PC-9 (cell line): ENCODE measurements at regions of chr15 and their contacts with region 1.

Region 1: DNA sequence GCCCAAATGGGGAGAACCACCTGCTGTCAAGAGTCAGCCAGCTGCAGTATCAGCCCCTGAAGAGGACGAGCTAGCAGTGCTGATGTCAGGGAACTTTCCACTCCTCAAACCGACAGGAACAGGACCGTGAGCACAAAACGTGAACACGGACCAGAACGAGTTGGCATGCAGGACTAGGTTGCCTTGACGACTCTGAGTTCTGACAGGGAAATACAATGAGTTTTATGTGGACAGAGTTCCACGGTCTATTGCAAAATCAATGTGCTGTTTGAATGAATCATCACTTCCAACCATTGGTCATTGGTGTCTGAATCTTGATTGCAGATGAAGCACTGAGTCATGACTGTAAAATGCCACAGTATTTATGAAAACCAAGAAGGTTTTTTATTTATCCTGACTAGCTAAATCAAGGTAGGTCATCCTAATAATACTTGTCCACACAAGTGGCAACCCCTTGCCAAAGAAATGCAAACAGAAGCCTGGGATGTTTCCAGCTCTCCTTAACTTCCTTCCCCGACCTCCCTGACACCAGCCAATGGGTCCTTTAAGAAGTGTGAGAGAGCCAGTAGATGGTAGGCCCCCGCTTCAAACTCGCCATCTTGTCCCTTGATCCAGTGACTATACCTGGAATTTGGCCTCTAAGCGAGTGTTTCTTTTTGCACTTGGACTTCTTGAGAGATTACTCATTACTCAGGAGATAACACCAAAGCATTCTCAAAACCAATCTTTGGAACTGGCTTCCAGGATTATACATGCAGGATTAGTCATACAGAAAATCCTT is 119.6 kb downstream of the ASB7 start:
- DNase-seq: peak; percentile 87 to 100
- H3K4me3 ChIP-seq: peak overlapping the region; percentile 41; the same call in 1 of the 2 replicates
- H3K27ac ChIP-seq: peak overlapping the region; percentile 100
- H3K4me1 ChIP-seq: peaks cover 83% of the 10 kb centered on the region
- H3K27me3 ChIP-seq: no peaks in the 10 kb centered on the region
- CTCF ChIP-seq: no peak

Region 2: DNA sequence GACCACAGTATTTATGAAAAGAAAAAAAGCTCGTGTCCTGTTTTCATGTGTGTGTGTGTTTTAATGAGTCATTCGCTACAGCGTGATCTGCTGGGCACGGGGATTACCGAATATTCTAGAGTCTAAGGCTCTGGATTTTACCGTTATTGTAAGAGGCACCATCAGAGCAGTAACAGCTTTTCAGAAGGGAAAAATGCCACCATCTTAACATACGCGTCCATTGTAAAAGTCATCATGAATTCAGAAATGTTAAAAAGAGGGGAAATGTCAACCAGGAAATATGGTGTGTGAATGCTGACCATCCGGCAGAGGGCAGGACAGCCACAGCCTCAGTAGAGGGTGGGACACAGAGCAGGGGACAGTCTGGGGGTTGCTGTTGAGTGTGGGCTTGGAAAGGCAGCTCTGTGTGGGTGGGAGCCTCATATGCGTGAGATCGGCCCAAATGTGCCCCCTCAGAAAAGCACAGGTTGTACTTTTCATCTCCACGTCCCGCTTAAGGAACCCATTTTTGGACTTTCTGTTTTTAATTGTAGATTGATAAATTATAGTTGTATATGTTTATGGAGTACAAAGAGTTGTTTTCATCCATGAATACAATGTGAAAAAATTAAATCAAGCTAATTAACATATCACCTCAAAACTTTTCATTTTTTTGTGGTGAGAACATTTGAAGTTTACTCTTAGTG is 50.0 kb before region 1 on chr15:
- CTCF ChIA-PET with region 1: no interaction called
- POLR2A ChIA-PET with region 1: no interaction called
- intact Hi-C with region 1: loop called (anchors 2 kb)
- DNase-seq: peak in 1 of 2 experiments; percentile 56
- H3K4me3 ChIP-seq: no peak overlapping the region
- H3K27ac ChIP-seq: peak overlapping the region; percentile 27; the same call in 1 of the 2 replicates
- H3K4me1 ChIP-seq: 0 out of 2 replicates have a peak, but pooled peaks cover 7% of the 10 kb centered on the region
- H3K27me3 ChIP-seq: no peaks in the 10 kb centered on the region
- CTCF ChIP-seq: peak; percentile 68

Region 3: GRCh38 chr15:100759698-100760356 is 37.9 kb after region 1 on chr15:
- CTCF ChIA-PET with region 1: interaction called, 3 read pairs
- POLR2A ChIA-PET with region 1: interaction called, 10 read pairs
- intact Hi-C with region 1: loop called (anchors 1 kb)
- DNase-seq: peak; percentile 67 to 88
- H3K4me3 ChIP-seq: no peak overlapping the region
- H3K27ac ChIP-seq: peak overlapping the region; percentile 73
- H3K4me1 ChIP-seq: peaks cover 43% of the 10 kb centered on the region
- H3K27me3 ChIP-seq: no peaks in the 10 kb centered on the region
- CTCF ChIP-seq: no peak

Region 4: GRCh38 chr15:100849252-100850171 is 127.6 kb after region 1 on chr15:
- CTCF ChIA-PET with region 1: no interaction called
- POLR2A ChIA-PET with region 1: interaction called, 13 read pairs
- intact Hi-C with region 1: loop called (anchors 1 kb)
- DNase-seq: peak; percentile 75 to 88
- H3K4me3 ChIP-seq: peak overlapping the region; percentile 96
- H3K27ac ChIP-seq: peak overlapping the region; percentile 99
- H3K4me1 ChIP-seq: peaks cover 45% of the 10 kb centered on the region
- H3K27me3 ChIP-seq: no peaks in the 10 kb centered on the region
- CTCF ChIP-seq: peak; percentile 56; the same call in 1 of the 2 replicates

Region 5: DNA sequence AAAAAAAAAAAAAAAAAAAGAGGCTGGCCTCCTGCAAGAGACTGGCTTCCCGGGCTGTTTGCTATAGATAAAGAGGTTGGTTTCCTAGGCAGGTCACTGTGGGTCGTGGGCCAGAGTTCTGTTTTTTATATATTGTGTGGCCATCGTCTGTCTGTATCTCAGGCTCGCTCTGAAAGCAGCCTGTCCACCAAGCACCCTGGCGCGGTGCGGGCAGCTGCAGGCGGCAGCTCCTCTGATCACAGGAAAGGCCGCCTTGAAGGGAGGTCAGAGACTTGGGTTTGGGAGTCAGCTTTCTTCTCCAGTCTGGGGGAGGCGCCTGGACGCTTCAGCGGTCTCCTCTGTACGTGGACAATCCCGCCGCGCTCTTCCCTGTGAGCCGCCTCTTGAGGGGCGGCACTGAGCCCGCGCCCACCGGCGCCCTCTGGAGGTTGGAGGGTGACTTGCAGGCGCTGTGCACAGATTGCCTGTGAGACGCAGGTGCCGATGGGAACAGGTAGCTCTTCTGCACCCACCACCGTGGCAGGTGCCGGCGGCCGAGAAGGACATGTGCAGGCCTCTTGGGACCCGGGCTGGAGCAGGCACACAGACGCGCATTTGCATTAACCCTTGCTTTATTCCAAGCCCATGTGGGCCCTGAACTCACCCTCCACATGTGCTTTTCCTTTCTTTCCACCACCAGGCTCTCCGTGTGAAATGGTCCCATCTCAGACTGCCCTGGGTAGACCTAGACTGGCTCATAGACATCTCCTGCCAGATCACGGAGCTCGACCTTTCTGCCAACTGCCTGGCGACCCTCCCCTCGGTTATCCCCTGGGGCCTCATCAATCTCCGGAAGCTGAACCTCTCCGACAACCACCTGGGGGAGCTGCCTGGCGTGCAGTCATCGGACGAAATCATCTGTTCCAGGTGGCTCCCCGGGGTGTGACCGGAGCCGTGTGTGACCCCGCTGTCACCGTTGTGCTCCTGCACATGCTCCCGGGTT is 286.5 kb after region 1 on chr15:
- CTCF ChIA-PET with region 1: interaction called, 3 read pairs
- POLR2A ChIA-PET with region 1: interaction called, 3 read pairs
- intact Hi-C with region 1: loop called (anchors 5 kb)
- DNase-seq: peak; percentile 72 to 88
- H3K4me3 ChIP-seq: peak overlapping the region; percentile 67
- H3K27ac ChIP-seq: no peak overlapping the region
- H3K4me1 ChIP-seq: 0 out of 2 replicates have a peak, but pooled peaks cover 4% of the 10 kb centered on the region
- H3K27me3 ChIP-seq: no peaks in the 10 kb centered on the region
- CTCF ChIP-seq: peak; percentile 97

Region 6: DNA sequence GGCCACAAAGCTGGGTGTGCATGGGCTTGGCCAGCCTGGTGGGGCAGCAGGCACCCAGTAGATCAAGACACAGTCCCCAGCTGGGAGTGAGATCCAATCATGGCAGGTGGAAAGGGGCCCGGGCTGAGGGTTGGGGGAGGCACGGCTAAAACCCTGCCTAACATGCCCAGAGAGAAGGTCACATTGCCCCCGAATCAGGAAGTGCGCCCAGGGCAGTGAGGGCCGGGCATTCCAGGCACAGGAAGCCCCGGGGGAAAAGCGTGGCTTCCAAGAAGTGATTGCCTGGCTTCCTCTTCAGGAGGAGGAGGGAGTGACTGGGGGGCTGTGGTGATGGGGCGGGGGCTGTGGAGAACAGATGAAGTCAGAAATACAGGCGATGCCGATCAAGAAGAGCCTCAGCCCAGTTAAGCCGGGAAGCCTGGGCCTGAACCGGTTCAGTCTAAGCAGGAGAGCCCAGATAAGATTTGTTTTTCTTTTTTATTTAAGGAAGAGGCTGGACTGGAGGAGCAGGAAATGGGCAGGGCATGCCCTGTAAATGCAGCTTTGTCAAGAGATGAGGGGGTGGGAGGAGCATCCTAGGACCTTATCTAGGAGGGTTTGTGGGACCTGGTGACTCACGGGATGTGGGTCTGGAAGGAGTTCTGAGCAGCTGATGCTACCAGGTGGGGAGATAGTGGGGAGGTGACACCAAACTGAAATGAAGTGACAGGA is 445.9 kb after region 1 on chr15:
- CTCF ChIA-PET with region 1: no interaction called
- POLR2A ChIA-PET with region 1: no interaction called
- intact Hi-C with region 1: no loop called
- DNase-seq: peak; percentile 58 to 74
- H3K4me3 ChIP-seq: no peak overlapping the region
- H3K27ac ChIP-seq: no peak overlapping the region
- H3K4me1 ChIP-seq: peaks cover 11% of the 10 kb centered on the region; the same call in 1 of the 2 replicates
- H3K27me3 ChIP-seq: no peaks in the 10 kb centered on the region
- CTCF ChIP-seq: no peak